Prostate gland (tissue), 2 donors: ENCODE measurements at regions of chrX and their contacts with region 1.

Region 1: DNA sequence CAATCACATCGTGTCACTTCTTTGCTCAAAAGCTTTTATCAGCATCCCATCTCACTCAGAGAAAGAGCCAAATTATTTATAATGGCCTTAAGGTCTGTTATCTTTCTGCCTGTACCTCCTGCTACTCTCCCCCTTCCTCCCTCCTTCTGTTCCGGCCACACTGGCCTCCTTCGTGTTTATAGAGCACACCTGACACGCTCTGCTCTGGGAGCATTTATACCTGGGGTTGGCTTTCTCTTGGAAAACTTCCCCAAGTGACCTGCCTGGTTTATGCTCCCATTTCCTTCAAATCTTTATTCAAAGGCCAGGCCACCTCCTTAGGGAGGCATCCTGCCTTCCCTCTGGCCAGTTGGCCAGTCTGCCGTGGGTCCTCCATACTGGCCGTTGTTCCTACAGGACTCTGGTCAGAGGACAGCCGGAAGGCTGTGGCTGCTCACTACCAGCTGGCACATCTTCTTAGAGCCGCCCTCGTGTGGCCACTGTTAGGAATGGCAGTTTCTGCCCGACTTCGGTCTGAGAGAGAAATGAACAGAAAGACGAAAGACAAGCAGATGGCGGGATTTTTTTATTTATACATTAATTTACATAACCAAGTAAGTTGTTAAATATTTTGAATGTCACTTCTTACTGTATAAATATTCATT is 80.2 kb upstream of the CBLL2 start:
- DNase-seq: peak; percentile 37
- H3K4me3 ChIP-seq: no peak overlapping the region
- H3K27ac ChIP-seq: no peak overlapping the region
- H3K4me1 ChIP-seq: no peaks in the 10 kb centered on the region
- H3K27me3 ChIP-seq: no peaks in the 10 kb centered on the region
- CTCF ChIP-seq: peak; percentile 24 to 73 (median 60)
- POLR2A ChIP-seq: no peak

Region 2: GRCh38 chrX:21982311-21982710 is 210.2 kb before region 1 on chrX:
- intact Hi-C with region 1: loop called (anchors 5 kb)
- DNase-seq: no peak
- H3K4me3 ChIP-seq: no peak overlapping the region
- H3K27ac ChIP-seq: no peak overlapping the region
- H3K4me1 ChIP-seq: no peaks in the 10 kb centered on the region
- H3K27me3 ChIP-seq: no peaks in the 10 kb centered on the region
- CTCF ChIP-seq: no peak
- POLR2A ChIP-seq: no peak

Region 3: GRCh38 chrX:22135994-22136684 is 56.4 kb before region 1 on chrX:
- intact Hi-C with region 1: loop called (anchors 2 kb)
- DNase-seq: peak; percentile 25
- H3K4me3 ChIP-seq: no peak overlapping the region
- H3K27ac ChIP-seq: peak overlapping the region; percentile 41 to 45
- H3K4me1 ChIP-seq: no peaks in the 10 kb centered on the region
- H3K27me3 ChIP-seq: no peaks in the 10 kb centered on the region
- CTCF ChIP-seq: peak; percentile 42 to 62 (median 56)
- POLR2A ChIP-seq: no peak